Dendritic cell treated with granulocyte-macrophage colony-stimulating factor and Interleukin-4, amounts not matched to agents 40 ng/mL and 50 ng/mL, for 4 days (primary cell): ENCODE measurements at regions of chr4 and their contacts with region 1.

Region 1: DNA sequence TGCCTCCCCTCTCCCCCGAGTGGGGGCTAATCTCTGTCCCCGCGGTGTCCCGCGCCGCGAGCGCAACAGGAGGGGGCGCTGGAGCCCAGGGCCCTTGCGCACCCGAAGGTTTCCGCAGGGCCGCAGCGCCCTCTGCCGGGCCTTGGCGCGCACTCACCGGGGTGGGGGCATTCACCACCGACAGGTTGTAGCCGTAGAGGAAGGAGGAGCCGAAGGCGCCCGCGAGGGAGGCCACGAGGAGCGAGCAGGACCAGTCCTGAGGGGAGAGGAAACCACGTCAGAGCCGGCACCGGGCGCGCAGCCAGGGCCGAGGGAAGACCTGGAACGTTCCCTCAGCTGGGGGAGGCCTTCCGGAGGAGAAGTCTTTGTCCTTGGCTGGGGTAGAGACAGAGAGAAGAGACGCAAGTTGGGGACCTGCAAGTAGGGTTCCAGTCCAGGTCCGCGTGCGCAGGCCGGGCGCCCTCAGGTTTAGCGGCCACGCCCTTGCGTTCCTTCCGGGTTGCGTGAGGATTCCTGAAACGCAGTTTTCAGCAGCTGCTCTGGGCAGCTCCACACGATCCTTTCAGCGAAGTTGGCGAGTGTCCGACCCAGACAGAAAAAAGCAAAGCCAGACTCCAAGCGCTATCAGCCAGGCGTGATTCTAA is 2.4 kb downstream of the SLC2A9 start:
- H3K4me3 Mint-ChIP-seq: peak overlapping the region; percentile 81
- H3K27ac Mint-ChIP-seq: peak overlapping the region; percentile 96
- H3K4me1 Mint-ChIP-seq: peaks cover 77% of the 10 kb centered on the region
- H3K27me3 Mint-ChIP-seq: no peaks in the 10 kb centered on the region

Region 2: DNA sequence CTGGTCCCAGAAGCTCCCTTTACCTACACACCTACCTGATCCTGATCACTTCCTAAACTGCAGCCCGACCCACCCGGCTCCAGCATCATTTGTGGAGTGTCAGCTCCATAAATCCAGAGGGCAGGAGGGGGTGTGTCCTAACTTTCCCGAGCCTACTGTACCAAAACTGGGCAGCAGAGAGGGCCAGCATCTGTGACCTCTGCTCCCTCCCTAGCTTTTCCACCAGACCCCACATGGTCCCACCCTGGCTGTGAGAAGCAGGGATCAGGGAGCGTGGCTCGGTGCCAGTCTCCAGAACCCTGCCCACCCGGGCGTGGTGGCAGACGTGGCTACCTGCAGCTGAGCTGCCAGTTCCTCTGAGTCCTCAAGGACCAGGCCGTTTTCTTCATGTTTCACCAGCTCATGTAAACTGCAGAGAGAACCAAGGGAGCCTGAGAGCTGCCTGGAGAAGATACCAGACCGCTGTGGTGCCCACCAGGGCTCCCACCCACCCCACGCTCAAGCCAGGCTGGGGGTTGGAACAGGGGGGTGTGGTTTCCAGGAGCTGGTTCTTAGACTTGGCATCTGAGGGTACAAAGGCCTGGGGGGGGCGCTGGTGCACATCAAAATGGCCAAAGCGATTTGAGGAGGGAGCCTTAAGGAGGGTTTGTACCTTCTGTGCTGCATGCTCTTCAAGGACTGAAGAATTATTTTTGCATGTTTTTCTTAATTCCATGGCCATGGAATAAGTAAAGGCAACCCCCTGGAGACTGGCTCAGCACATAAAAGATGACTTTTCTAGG is 314.2 kb before region 1 on chr4:
- intact Hi-C with region 1: loop called (anchors 5 kb)
- H3K4me3 Mint-ChIP-seq: no peak overlapping the region
- H3K27ac Mint-ChIP-seq: no peak overlapping the region
- H3K4me1 Mint-ChIP-seq: peaks cover 11% of the 10 kb centered on the region
- H3K27me3 Mint-ChIP-seq: peaks cover 18% of the 10 kb centered on the region

Region 3: GRCh38 chr4:9898596-9899305 is 120.2 kb before region 1 on chr4:
- intact Hi-C with region 1: loop called (anchors 5 kb)
- H3K4me3 Mint-ChIP-seq: no peak overlapping the region
- H3K27ac Mint-ChIP-seq: no peak overlapping the region
- H3K4me1 Mint-ChIP-seq: peaks cover 31% of the 10 kb centered on the region
- H3K27me3 Mint-ChIP-seq: no peaks in the 10 kb centered on the region

Region 4: DNA sequence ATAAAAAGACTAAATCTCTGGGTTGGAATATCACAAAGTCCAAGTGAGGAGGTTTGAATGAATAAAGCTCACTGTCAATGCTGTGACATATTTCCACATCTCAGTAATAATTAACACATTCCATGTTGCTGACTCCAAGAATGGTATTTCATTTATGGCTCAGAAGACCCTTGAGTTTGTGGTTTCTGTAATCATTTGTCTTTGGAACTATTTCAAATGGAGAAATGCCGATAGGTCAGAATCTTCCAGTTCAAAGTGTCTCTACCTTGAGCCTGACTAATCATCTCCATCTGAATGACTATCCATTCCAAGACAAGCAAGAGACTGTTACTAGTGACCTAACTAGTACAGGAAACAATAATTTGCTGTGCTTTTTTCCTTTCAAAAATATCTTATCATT is 26.5 kb after region 1 on chr4:
- intact Hi-C with region 1: loop called (anchors 2 kb)
- H3K4me3 Mint-ChIP-seq: no peak overlapping the region
- H3K27ac Mint-ChIP-seq: peak overlapping the region; percentile 74
- H3K4me1 Mint-ChIP-seq: peaks cover 44% of the 10 kb centered on the region
- H3K27me3 Mint-ChIP-seq: peaks cover 6% of the 10 kb centered on the region

Region 5: DNA sequence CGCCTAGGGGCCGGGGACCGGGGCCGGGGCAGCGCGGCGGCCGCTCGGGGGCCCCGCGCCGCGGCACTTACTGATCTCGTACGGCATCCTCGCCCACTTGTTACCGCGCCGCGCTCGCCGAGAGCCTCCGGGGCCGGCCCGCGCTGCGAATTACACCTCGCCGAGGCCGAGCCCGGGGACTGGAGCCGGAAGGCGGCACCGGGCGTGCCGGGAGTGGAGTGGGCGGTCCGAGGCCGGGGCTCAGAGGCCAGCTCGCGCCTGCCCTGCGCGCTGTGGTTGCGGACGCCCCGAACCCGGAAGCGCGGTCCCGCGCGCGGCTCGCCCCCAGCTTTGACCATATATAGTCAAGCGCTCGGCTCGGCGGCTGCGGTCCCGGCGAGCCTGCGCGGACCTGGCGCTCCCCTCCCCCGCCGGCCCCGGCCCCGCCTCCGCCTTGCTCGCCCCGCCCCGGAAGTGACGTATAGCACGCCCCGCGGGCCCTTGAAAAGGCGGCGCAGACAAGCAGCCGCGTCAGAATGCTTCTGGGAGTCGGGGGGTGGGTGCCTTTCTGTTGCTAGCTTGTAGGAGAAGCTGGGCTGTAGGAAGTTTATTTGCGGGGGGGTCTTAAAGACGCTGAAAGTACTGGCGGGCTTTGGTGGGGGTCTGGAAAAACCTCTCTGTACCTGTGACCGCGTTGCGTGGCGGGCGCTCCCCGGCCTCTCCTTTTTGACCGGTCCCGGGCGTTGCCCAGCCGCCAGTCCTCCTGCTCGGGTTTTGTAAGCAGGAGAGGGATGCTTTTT is 97.8 kb after region 1 on chr4 and contains the start of gene WDR1:
- intact Hi-C with region 1: loop called (anchors 2 kb)
- H3K4me3 Mint-ChIP-seq: peak within 1 kb of the TSS; percentile 95
- H3K27ac Mint-ChIP-seq: peak within 1 kb of the TSS; percentile 99
- H3K4me1 Mint-ChIP-seq: peaks cover 70% of the 10 kb centered on the region
- H3K27me3 Mint-ChIP-seq: peaks cover 14% of the 10 kb centered on the region